Posterior vena cava (tissue), 2 donors: ENCODE measurements at regions of chr2 and their contacts with region 1.

Region 1: DNA sequence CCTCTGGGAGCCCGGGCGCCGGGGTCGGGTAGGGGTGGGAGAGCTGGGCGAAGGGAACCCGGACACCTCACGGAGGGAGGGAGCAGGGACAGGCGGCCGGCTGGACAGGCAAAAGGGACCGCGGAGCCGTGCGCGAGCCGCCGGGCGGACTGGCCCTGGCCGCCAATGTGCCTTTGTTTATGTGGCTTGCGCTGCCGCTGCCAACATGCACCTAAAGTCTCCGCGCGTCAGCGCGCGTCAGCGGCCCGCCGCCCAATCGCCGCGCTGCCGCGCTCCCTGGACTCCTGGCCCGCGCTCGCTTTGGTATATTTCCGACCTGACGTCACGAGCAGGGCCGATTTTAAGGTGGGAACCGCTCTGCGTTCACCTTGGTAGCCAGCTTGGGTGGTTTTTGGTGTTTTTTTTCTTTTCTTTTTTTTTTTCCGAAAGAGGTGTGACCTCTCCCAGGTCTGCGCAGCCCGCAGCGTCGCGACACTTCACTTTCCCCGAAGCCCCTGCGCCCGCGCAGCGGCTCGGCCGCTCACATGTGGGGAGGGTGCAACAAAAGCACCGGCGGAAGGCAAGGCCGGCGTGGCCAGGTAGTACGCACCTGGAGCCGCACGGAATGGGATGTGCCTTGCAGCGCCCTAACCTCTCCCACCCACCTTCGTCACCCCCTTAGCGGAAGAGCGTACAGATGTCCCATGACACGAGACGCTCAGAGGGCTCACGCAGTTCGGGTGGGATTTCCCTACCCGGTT is at the start of gene NR4A2:
- DNase-seq: peak; percentile 97
- total RNA-seq, gene NR4A2: 7.8 to 15.5 TPM

Region 2: DNA sequence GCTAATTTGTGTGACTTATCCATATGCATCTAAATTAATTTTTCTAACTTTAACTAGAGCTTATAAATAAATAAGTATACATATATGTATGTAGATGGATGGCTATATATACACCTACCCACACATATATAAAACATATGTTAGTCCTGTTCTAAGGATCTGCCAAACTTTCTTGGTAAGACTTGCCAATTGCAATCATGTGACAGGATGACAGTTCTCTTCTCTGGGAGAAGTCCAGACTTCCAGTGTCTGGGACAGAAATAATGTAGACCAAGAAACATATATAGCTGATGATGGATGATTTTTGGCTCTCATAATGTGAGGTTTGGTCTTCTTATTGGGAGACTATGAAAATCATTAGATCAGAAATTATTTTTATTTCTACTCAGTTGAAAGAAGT is 30.4 kb after region 1 on chr2:
- intact Hi-C with region 1: no loop called
- DNase-seq: no peak

Region 3: DNA sequence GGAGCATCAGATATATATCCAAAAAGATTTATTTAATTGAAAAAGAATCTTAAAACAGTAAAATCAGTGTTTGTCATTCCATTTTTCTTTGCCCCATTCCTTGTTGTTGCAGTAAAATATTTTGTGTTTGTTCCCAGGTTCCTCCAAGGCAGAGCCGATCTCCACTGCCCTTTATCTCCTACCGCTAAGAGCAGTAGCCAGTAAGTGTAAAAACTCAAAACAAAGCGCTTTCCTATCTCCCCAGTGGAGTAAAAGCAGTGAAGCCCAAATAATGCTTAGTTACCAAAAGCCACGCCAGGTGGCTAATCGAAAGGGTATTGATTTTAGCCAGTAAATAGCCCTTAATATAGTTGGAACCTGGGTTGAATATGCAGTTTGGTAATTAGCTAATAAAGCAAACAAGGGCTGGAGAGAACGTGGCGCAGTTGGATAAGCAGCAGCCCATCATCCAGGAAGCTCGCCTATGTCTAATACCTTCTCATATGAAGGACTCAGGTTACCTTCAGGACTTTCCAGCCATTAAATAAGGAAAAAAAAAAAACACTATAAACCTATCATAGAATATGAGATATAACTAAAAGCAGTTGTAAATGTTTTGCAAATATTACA is 91.1 kb after region 1 on chr2:
- intact Hi-C with region 1: no loop called
- DNase-seq: no peak

Region 4: DNA sequence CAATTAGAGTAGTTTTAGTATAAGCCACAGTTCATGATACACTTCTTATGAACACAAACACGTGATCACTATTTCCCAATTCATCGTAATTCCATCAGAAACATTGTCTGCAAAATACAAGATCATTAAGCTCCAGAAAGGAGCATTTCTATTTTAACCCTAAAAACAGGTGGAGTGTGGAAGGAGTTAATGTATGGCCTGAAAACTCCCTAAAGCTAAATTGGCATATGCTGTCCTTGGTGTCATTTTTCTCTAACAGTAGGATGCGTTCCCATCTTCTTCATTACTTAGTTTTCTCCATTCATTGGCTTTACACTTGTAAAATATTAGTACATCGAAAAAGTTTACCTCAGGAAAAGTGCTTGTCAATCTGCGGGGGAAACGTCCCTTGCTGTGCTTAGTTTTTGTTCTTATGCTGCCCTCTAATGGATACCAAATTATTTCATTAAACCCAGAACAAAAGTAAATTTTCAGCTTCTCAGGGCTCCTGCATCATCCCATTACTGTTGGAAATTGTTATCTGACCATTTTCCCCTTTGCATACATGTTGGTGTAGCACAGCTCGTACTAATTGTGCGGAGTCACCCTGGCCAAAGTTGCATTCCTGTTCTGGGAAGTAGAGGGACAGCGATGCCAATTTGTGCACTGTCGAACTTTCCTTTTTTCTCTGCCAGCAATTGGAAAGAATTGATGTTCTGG is 256.8 kb after region 1 on chr2:
- intact Hi-C with region 1: loop called in 1 of 2 experiments (anchors 10 kb)
- DNase-seq: no peak